ENCODE measurements at regions of chr11 and their contacts with region 1.

Region 1: GRCh38 chr11:62542750-62543567 is 3.6 kb downstream of the AHNAK start:
- DNase-seq: peak; percentile 80
- H3K4me3 Mint-ChIP-seq: peak overlapping the region; percentile 100
- H3K27ac Mint-ChIP-seq: peak overlapping the region; percentile 93
- H3K4me1 Mint-ChIP-seq: peaks cover 76% of the 10 kb centered on the region
- H3K27me3 Mint-ChIP-seq: peaks cover 4% of the 10 kb centered on the region

Region 2: DNA sequence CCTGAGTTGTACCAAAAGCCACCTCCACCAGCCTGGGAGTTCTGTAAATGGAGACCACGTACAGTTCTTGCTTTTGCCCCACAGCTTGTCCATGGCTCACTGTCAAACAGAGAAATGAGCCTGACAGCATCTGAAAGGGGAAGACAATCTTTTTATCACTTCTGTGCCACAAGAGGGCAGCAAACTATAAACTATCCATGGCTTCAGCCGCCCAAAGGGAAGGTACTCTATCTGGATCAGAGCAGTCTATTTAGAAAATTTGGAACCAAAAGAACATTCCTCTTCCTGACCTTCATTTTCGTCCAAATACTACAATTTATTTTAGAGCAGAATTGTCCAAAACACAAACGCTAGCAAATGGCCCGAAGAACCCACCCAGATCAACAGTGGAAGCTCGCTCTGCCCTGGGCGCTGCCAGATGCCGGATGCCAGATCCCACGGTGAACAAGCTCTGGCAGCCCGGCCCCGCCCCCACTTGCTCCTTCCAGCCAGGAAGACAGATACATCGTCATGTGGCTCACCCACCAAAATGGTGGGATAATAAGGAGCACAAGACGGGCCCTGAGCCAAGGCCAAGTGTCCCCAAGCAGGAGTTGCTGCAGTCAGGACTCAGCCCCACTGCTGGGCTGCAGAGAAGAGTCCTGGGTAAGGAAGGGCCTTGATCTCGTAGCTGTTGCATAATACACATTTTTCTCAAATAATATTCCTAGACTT is 148.0 kb before region 1 on chr11:
- CTCF ChIA-PET with region 1: interaction called, 50 read pairs
- POLR2A ChIA-PET with region 1: interaction called, 4 read pairs
- DNase-seq: peak; percentile 56
- H3K4me3 Mint-ChIP-seq: no peak overlapping the region
- H3K27ac Mint-ChIP-seq: no peak overlapping the region
- H3K4me1 Mint-ChIP-seq: peaks cover 4% of the 10 kb centered on the region
- H3K27me3 Mint-ChIP-seq: peaks cover 15% of the 10 kb centered on the region

Region 3: DNA sequence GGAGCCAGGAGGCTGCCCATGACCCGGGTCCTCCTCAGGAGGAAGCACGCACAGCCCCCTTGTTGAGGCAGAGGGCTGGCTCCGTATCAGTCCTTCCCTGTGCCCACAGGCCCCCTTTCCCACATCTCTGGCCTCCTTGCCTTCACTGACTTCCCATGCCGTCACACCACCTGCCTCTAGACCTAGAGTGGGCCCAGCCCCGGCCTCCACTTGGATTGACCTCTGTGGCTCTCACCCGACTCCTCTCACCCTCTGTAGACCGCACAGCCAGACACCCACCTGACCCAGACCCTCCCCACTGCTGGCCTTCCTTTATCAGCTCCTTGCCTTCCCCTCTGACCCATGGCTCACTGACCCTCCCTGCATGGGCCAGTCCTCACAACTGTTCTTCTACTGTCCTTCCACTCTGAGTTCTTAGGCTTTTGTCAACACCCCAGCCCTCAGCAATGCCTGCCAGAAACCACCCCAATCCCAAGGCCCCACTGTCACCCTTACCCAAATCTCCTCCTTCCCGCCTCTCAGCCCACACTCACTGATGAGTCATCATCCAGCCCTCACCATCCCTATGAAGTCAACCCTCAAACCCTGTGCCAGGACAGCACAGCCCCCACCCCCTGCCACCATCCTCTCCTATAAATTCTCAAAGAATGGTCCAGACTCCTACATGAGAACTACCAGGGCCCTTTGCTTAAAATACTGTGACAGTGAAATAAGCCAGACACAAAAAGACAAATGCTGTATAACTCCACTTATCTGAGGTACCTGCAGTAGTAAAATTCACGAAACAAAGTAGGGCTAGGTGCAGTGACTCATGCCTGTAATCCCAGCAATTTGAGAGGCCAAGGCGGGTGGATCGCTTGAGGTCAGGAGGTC is 70.7 kb before region 1 on chr11:
- CTCF ChIA-PET with region 1: interaction called, 10 read pairs
- POLR2A ChIA-PET with region 1: no interaction called
- DNase-seq: no peak
- H3K4me3 Mint-ChIP-seq: no peak overlapping the region
- H3K27ac Mint-ChIP-seq: peak overlapping the region; percentile 36
- H3K4me1 Mint-ChIP-seq: peaks cover 7% of the 10 kb centered on the region
- H3K27me3 Mint-ChIP-seq: no peaks in the 10 kb centered on the region

Region 4: GRCh38 chr11:62487738-62488551 is 55.0 kb before region 1 on chr11:
- CTCF ChIA-PET with region 1: interaction called, 10 read pairs
- POLR2A ChIA-PET with region 1: no interaction called
- DNase-seq: no peak
- H3K4me3 Mint-ChIP-seq: no peak overlapping the region
- H3K27ac Mint-ChIP-seq: no peak overlapping the region
- H3K4me1 Mint-ChIP-seq: no peaks in the 10 kb centered on the region
- H3K27me3 Mint-ChIP-seq: peaks cover 2% of the 10 kb centered on the region

Region 5: GRCh38 chr11:62567018-62567633 is 24.2 kb after region 1 on chr11:
- CTCF ChIA-PET with region 1: interaction called, 15 read pairs
- POLR2A ChIA-PET with region 1: interaction called, 30 read pairs
- DNase-seq: no peak
- H3K4me3 Mint-ChIP-seq: peak overlapping the region; percentile 9
- H3K27ac Mint-ChIP-seq: peak overlapping the region; percentile 73
- H3K4me1 Mint-ChIP-seq: peaks cover 63% of the 10 kb centered on the region
- H3K27me3 Mint-ChIP-seq: no peaks in the 10 kb centered on the region